Activated CD4-positive, alpha-beta memory T cell treated with anti-CD3 and anti-CD28 coated beads for 36 hours (primary cell): ENCODE measurements at regions of chr12 and their contacts with region 1.

Region 1: GRCh38 chr12:103495479-103496456 is at the start of gene C12orf42:
- DNase-seq: peak; percentile 67
- H3K4me3 Mint-ChIP-seq: peak within 1 kb of the TSS; percentile 52
- H3K27ac Mint-ChIP-seq: no peak within 1 kb of the TSS
- H3K4me1 Mint-ChIP-seq: peaks cover 26% of the 10 kb centered on the region
- H3K27me3 Mint-ChIP-seq: peaks cover 30% of the 10 kb centered on the region
- total RNA-seq, gene C12orf42: not detected

Region 2: DNA sequence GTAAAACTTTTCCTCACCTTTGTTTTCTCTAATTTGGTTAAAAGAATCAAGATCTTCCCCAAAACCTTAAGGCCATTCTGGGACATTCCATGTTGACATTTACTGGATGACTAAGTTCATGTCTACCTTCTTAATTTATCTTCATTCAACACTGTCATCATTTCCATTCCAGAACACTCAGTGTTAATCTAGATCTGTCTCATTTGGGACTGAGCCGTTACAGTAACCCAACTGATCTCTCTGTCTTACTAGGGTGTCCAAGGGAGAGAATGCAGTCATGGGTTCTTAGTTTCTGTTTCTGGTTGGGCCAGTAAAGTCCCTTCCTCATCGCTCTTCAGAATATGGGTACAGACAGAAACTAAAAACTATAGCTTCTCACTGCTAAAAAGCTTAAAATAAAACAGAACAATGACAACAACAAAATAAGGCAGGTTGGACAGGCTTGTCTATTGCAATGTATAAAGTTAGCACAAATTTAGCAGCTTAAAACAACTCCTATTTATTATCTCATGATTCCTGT is 393.5 kb before region 1 on chr12:
- CTCF ChIA-PET with region 1: no interaction called
- POLR2A ChIA-PET with region 1: no interaction called
- intact Hi-C with region 1: loop called (anchors 1 kb)
- DNase-seq: no peak
- H3K4me3 Mint-ChIP-seq: no peak overlapping the region
- H3K27ac Mint-ChIP-seq: no peak overlapping the region
- H3K4me1 Mint-ChIP-seq: peaks cover 1% of the 10 kb centered on the region
- H3K27me3 Mint-ChIP-seq: no peaks in the 10 kb centered on the region

Region 3: GRCh38 chr12:103442822-103443221 is 52.9 kb before region 1 on chr12:
- CTCF ChIA-PET with region 1: no interaction called
- POLR2A ChIA-PET with region 1: no interaction called
- intact Hi-C with region 1: no loop called
- DNase-seq: no peak
- H3K4me3 Mint-ChIP-seq: no peak overlapping the region
- H3K27ac Mint-ChIP-seq: no peak overlapping the region
- H3K4me1 Mint-ChIP-seq: peaks cover 21% of the 10 kb centered on the region
- H3K27me3 Mint-ChIP-seq: no peaks in the 10 kb centered on the region

Region 4: DNA sequence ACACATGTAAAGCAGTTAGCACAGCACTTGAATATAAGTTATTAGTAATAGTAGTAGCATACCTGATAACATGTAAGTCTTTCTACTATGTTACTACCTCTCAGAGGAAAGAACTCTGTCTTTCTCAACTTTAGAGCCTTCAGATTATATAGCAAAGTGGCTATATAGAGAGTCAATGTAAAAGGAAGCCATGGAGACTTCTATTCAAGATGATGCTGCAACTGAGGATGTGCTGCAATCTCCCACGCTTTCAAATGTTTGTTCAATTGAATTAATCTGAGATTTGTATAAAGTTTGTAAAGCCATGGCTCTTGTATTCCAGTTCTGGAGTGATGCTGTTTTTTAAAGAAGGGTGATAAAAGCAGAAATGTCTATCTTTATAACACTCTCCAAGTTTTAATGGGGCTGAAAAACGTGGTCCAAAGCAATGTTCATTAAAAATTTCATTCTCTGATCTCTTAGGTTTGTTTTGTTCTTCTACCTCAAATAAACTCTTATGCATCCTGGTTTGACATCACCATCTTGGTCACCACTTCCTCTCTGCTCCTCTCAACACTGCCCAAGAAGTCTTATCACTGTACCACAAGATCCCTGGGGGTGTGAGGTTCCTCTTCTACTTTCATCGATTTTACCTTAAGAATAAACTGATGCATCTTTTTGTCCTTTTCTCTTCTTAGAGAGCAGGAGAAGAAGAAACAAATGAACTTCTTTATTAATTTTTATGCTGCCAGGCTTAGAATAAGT is 40.6 kb before region 1 on chr12:
- CTCF ChIA-PET with region 1: no interaction called
- POLR2A ChIA-PET with region 1: no interaction called
- intact Hi-C with region 1: loop called (anchors 5 kb)
- DNase-seq: no peak
- H3K4me3 Mint-ChIP-seq: no peak overlapping the region
- H3K27ac Mint-ChIP-seq: no peak overlapping the region
- H3K4me1 Mint-ChIP-seq: peaks cover 22% of the 10 kb centered on the region
- H3K27me3 Mint-ChIP-seq: no peaks in the 10 kb centered on the region

Region 5: GRCh38 chr12:103632554-103633216 is 136.9 kb after region 1 on chr12:
- CTCF ChIA-PET with region 1: no interaction called
- POLR2A ChIA-PET with region 1: no interaction called
- intact Hi-C with region 1: loop called (anchors 5 kb)
- DNase-seq: peak; percentile 75
- H3K4me3 Mint-ChIP-seq: no peak overlapping the region
- H3K27ac Mint-ChIP-seq: no peak overlapping the region
- H3K4me1 Mint-ChIP-seq: no peaks in the 10 kb centered on the region
- H3K27me3 Mint-ChIP-seq: no peaks in the 10 kb centered on the region

Region 6: DNA sequence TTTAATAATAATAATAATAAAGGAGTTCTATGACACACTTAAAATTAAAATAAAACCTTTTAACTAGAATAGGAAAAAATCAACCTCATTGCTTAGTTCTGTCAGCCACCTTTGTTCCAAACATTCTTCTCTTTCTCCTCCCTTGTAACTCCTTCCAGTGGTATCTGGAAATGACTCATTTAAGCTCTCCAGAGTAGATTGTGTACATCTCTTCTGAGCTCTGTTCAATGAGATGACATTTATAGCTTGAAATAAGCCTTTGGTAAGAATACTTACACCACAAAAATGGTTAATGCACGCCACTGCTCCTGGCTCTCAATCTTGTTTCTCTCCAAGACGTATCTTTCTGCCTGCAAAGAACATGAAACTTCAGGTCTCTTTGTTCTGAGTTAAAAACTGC is 161.6 kb after region 1 on chr12:
- CTCF ChIA-PET with region 1: no interaction called
- POLR2A ChIA-PET with region 1: no interaction called
- intact Hi-C with region 1: no loop called
- DNase-seq: no peak
- H3K4me3 Mint-ChIP-seq: no peak overlapping the region
- H3K27ac Mint-ChIP-seq: no peak overlapping the region
- H3K4me1 Mint-ChIP-seq: peaks cover 12% of the 10 kb centered on the region
- H3K27me3 Mint-ChIP-seq: peaks cover 10% of the 10 kb centered on the region